ENCODE measurements at regions of chr1 and their contacts with region 1.

Region 1: DNA sequence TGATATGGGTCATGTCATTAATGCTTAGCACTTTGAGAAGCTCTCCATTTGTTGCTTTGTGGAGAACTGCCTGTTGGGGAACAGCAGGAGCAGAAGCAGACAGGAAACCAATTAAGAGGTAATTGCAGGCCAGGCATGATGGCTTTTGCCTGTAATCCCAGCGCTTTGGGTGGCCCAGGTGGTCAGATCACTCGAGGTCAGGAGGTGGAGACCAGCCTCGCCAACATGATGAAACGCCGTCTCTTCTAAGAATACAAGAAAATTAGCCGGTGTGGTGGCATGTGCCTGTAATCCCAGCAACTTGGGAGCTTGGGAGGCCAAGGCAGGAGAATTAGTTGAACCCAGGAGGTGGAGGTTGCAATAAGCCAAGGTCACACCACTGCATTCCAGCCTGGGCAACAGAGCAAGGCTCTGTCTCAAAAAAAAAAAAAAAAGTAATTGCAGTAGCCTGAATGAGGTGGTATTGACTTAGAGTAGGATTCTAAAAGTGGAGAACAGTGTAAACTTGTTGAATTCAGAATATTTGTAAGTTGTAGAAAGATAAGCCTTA is 57.7 kb upstream of the FASLG start:
- DNase-seq: no peak
- ATAC-seq: peak; percentile 39
- H3K4me3 ChIP-seq: no peak overlapping the region
- H3K27ac ChIP-seq: 0 out of 3 replicates have a peak overlapping the region, but pooled peaks have one; percentile 15
- H3K4me1 ChIP-seq: peaks cover 3% of the 10 kb centered on the region in 2 experiments; a peak in 2 of 5 replicates
- H3K27me3 ChIP-seq: no peaks in the 10 kb centered on the region
- CTCF ChIP-seq: no peak
- EP300 ChIP-seq: no peak
- POLR2A ChIP-seq: no peak
- RAD21 ChIP-seq: no peak

Region 2: GRCh38 chr1:172476218-172476811 is 124.8 kb before region 1 on chr1:
- CTCF ChIA-PET with region 1: no interaction called
- POLR2A ChIA-PET with region 1: no interaction called
- in situ Hi-C with region 1: no loop called
- intact Hi-C with region 1: no loop called
- DNase-seq: no peak
- ATAC-seq: no peak
- H3K4me3 ChIP-seq: no peak overlapping the region
- H3K27ac ChIP-seq: no peak overlapping the region
- H3K4me1 ChIP-seq: peaks cover 6 to 10% of the 10 kb centered on the region in 2 experiments; a peak in 3 of 5 replicates
- H3K27me3 ChIP-seq: no peaks in the 10 kb centered on the region
- CTCF ChIP-seq: no peak
- EP300 ChIP-seq: no peak
- POLR2A ChIP-seq: no peak
- RAD21 ChIP-seq: no peak

Region 3: GRCh38 chr1:172559572-172560210 is 41.5 kb before region 1 on chr1:
- CTCF ChIA-PET with region 1: no interaction called
- POLR2A ChIA-PET with region 1: interaction called, 3 read pairs
- in situ Hi-C with region 1: no loop called
- intact Hi-C with region 1: loop called (anchors 2 kb)
- DNase-seq: no peak
- ATAC-seq: peak; percentile 23; the same call in 1 of the 3 replicates
- H3K4me3 ChIP-seq: no peak overlapping the region
- H3K27ac ChIP-seq: no peak overlapping the region
- H3K4me1 ChIP-seq: no peaks in the 10 kb centered on the region
- H3K27me3 ChIP-seq: no peaks in the 10 kb centered on the region
- CTCF ChIP-seq: no peak
- EP300 ChIP-seq: no peak
- POLR2A ChIP-seq: no peak
- RAD21 ChIP-seq: no peak

Region 4: GRCh38 chr1:172582893-172583292 is 18.3 kb before region 1 on chr1:
- CTCF ChIA-PET with region 1: no interaction called
- POLR2A ChIA-PET with region 1: no interaction called
- in situ Hi-C with region 1: no loop called
- intact Hi-C with region 1: no loop called
- DNase-seq: no peak
- ATAC-seq: no peak
- H3K4me3 ChIP-seq: no peak overlapping the region
- H3K27ac ChIP-seq: no peak overlapping the region
- H3K4me1 ChIP-seq: peaks cover 0 to 15% of the 10 kb centered on the region in 2 experiments; a peak in 2 of 5 replicates
- H3K27me3 ChIP-seq: no peaks in the 10 kb centered on the region
- CTCF ChIP-seq: no peak
- EP300 ChIP-seq: no peak
- POLR2A ChIP-seq: no peak
- RAD21 ChIP-seq: no peak